Left cardiac atrium (tissue), 4 donors: ENCODE measurements at regions of chr7 and their contacts with region 1.

Region 1: DNA sequence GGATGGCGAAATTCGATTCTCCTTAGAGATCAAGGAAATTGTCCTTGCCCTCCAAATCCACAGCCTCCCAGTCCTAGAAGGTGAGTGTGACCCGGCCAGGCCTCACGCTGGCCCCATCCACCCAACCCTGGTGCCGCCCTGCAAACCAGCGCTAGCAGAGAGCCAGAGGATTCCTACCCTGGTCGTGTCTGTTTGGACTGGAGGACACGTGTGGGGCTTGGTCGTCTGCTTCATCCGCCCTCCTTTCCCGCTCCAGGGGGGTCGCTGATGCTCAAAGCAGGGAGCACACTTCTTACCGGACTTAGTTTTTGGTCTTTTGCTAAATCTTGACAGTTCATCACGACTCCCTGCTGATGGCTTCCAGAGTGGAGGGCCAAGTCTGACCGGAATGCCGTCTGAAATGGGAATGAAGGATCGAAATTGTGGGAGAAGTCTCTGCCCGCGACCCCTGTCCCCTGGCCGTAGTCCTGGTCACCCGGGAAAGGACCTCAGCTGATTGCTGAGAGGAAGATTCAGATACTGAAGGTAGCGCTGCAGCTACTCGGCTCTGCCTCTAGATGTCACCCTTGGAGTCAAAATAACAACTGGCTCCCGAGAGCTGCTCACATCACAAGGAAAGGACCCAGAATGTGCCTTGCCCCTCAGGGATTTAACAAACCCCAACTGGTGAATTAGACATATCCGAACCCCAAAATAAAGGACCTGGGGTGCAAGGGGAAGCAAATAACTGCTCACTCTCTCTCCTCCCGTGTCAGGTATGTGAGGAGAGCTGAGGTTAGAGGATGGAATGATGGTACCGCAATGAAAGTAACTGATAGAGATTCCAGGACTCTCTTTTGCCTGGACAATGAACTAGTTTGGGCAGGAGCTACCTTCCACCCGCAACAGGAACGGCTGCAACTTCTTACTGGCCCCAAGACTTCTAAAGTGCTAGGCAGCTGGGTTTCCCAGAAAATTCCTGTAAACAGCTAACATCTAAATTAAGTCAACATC is 23.5 kb upstream of the ORC5 start:
- DNase-seq: peak; percentile 25
- ATAC-seq: peak; percentile 68 to 80

Region 2: GRCh38 chr7:104272767-104273384 is 41.5 kb after region 1 on chr7:
- intact Hi-C with region 1: no loop called
- DNase-seq: no peak
- ATAC-seq: no peak

Region 3: GRCh38 chr7:104914421-104914820 is 683.1 kb after region 1 on chr7:
- intact Hi-C with region 1: loop called in 1 of 2 experiments (anchors 10 kb)
- DNase-seq: no peak
- ATAC-seq: no peak